ENCODE measurements at regions of chr10 and their contacts with region 1.

Region 1: DNA sequence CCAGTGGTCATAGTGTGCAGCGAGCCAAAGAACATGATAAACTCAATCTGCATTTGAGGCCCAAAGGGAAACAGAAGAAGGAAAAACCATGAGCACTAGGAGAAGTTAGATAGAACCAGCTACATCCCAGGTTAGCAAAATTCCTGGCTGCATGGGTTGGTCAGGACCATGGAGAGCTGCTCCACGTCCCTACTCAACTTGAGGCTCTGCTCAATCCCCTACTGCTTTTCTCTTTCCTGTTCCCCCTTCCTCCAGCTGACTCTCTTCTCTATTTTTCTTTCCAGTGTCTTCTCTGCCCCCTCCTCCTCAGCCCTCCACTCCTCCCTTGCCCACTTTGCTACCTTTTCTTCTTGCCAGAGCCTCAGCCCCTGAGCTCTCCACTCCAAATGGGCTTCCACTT is 21.9 kb upstream of the VSIR start:
- DNase-seq: peak; percentile 62 to 77 (median 69)
- ATAC-seq: peak; percentile 38; the same call in 1 of the 3 replicates
- H3K4me3 ChIP-seq: no peak overlapping the region
- H3K27ac ChIP-seq: no peak overlapping the region
- H3K4me1 ChIP-seq: peaks cover 20 to 28% of the 10 kb centered on the region in 2 experiments
- H3K27me3 ChIP-seq: peaks cover 18 to 19% of the 10 kb centered on the region in 2 experiments; a peak in 4 of 5 replicates
- CTCF ChIP-seq: no peak
- EP300 ChIP-seq: no peak
- POLR2A ChIP-seq: no peak
- RAD21 ChIP-seq: no peak

Region 2: DNA sequence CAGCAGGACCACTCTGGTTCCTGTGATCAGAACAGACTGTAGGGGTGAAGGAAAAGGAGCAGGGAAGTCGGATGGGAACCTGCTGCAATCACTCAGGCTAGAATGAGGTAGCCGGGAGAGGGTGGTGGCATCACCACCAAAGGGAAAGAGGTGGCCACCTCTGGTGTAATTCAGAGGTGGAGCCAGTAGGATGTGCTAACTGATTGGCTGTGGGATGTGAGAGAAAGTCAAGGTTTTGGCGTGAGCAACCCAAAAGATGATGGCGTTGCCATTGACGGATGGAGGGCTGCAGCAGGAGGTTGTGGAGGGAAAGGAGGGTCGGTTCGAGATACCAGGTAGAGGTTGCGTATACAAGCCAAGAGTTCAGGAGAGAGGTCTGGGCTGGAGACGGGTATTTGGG is 14.5 kb before region 1 on chr10:
- CTCF ChIA-PET with region 1: no interaction called
- POLR2A ChIA-PET with region 1: interaction called, 10 read pairs
- in situ Hi-C with region 1: no loop called
- intact Hi-C with region 1: no loop called
- DNase-seq: peak; percentile 38 to 66 (median 50)
- ATAC-seq: peak; percentile 68
- H3K4me3 ChIP-seq: no peak overlapping the region
- H3K27ac ChIP-seq: no peak overlapping the region
- H3K4me1 ChIP-seq: peaks cover 0 to 3% of the 10 kb centered on the region in 2 experiments; a peak in 2 of 5 replicates
- H3K27me3 ChIP-seq: peaks cover 26 to 57% of the 10 kb centered on the region in 2 experiments
- CTCF ChIP-seq: peak; percentile 67 to 78 (median 68)
- EP300 ChIP-seq: no peak
- POLR2A ChIP-seq: no peak
- RAD21 ChIP-seq: peak; percentile 65 to 83